BJ (cell line): ENCODE measurements at regions of chr9 and their contacts with region 1.

Region 1: DNA sequence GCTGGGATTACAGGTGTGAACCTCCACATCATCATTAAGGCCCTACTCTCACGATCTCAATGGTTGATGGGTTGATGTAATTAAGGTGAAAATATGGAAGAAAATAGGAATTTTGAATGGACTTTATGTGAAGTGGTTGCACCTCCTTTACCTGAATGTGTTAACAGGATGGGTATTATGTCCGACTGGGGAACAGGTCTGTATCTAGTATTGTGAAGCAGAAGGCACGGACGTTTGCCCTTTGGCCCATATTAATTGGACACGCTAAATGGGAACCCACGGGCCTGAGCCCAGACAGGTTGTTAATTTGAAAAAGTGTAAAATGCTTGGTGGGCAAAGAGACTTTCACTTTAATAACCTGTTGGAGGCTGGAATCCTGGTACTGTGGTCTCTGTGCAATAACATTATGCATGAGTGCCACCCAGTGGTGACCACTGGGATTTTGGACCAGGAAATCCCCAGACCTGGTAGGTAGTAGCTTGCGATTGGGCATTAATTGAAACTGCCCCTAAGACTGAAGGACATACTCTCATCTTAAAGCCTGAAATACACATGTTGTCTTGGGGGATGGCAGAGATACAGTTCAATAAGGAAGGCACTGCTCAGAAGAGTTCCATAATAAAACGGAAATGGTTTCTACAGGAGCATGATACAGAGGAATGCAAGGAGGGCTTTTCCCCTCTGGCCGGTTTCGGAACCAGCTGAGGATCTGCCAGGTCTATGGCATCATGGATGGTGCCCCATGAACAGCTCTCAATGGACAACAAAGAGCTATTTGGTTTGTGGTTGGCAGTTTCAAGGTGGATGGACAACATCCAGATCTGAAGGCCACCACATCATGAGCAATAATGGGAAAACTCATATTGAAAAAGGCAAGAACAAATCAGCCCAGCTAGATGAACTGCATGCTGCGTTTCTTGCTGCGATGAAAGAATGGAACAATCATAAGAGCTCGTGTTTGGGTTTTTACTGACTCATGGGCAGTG is 26.2 kb upstream of the BICD2 start:
- DNase-seq: no peak
- H3K4me3 ChIP-seq: no peak overlapping the region
- H3K27me3 ChIP-seq: peaks cover 12% of the 10 kb centered on the region
- CTCF ChIP-seq: peak; percentile 77

Region 2: DNA sequence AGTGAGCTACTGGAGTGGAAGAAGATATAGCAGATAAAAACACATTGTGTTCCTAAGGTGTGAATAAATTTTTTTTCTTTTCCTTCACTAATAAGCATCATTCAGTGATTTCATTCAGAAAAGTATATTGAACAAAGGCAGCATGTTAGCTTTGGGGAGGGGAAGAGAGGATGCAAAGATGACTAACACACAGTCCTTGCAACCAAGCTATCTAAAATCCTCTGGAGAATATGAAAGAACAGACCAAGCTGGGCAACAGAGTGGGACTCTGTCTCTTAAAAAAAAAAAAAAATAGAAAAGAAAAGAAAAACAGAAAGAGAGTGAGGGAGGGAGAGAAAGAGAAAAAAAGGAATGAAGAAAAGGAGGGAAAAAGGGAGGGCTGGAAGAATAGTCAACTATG is 344.3 kb before region 1 on chr9:
- CTCF ChIA-PET with region 1: no interaction called
- POLR2A ChIA-PET with region 1: no interaction called
- DNase-seq: no peak
- H3K4me3 ChIP-seq: no peak overlapping the region
- H3K27me3 ChIP-seq: no peaks in the 10 kb centered on the region
- CTCF ChIP-seq: no peak

Region 3: GRCh38 chr9:92728831-92729734 is 61.8 kb before region 1 on chr9:
- CTCF ChIA-PET with region 1: interaction called, 20 read pairs
- POLR2A ChIA-PET with region 1: no interaction called
- DNase-seq: no peak
- H3K4me3 ChIP-seq: no peak overlapping the region
- H3K27me3 ChIP-seq: no peaks in the 10 kb centered on the region
- CTCF ChIP-seq: peak; percentile 72

Region 4: GRCh38 chr9:92764988-92765936 is 25.6 kb before region 1 on chr9:
- CTCF ChIA-PET with region 1: interaction called, 17 read pairs
- POLR2A ChIA-PET with region 1: no interaction called
- DNase-seq: peak; percentile 86
- H3K4me3 ChIP-seq: peak overlapping the region; percentile 89
- H3K27me3 ChIP-seq: no peaks in the 10 kb centered on the region; the same call in 1 of the 2 replicates
- CTCF ChIP-seq: peak; percentile 99

Region 5: GRCh38 chr9:93051680-93052089 is 260.9 kb after region 1 on chr9:
- CTCF ChIA-PET with region 1: no interaction called
- POLR2A ChIA-PET with region 1: no interaction called
- DNase-seq: peak; percentile 4
- H3K4me3 ChIP-seq: no peak overlapping the region
- H3K27me3 ChIP-seq: no peaks in the 10 kb centered on the region
- CTCF ChIP-seq: no peak